ENCODE measurements at regions of chr11 and their contacts with region 1.

Region 1: GRCh38 chr11:126355324-126355925 is at the start of gene ST3GAL4:
- DNase-seq: peak in 1 of 2 donors; percentile 83
- H3K4me3 ChIP-seq: peak within 1 kb of the TSS; percentile 84 to 88
- H3K27ac ChIP-seq: peak within 1 kb of the TSS; percentile 80 to 86
- H3K4me1 ChIP-seq: peaks cover 22 to 53% of the 10 kb centered on the region in 2 donors
- H3K27me3 ChIP-seq: no peaks in the 10 kb centered on the region
- CTCF ChIP-seq: no peak
- total RNA-seq, gene ST3GAL4: 61.4 TPM

Region 2: DNA sequence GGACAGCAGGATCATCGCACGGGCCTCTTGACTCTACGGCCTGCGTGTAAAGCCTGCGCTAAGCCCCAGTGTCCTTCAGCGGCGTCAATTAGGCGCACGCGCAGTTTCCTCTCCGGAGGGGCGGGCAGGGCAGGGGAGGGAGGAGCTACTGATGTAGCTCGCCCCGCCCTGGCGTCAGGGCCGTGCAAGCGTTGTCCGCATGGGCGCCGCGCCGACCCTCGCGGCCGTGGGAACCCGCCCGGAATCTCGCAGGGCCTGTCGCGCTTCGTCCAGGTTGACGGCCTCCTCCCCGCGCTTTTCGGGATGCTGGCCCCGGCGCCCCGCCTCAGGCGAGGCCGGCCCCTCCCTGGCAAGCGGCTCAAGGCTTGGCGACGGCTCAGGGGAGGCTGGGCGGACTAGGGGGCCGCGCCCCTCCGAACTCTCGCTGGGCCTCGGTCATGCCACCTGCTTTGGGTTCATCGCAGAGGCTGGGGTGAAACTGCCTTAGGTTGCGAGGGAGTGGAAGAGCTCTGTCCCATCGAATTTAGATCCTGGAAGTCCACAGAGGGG is 61.2 kb after region 1 on chr11:
- intact Hi-C with region 1: loop called (anchors 2 kb)
- DNase-seq: peak; percentile 44 to 93
- H3K4me3 ChIP-seq: peak overlapping the region; percentile 52 to 62
- H3K27ac ChIP-seq: peak overlapping the region; percentile 86 to 92
- H3K4me1 ChIP-seq: peaks cover 21 to 28% of the 10 kb centered on the region in 2 donors
- H3K27me3 ChIP-seq: no peaks in the 10 kb centered on the region
- CTCF ChIP-seq: no peak

Measured in ascending aorta (tissue), 2 donors.